ENCODE measurements at regions of chr19 and their contacts with region 1.

Region 1: DNA sequence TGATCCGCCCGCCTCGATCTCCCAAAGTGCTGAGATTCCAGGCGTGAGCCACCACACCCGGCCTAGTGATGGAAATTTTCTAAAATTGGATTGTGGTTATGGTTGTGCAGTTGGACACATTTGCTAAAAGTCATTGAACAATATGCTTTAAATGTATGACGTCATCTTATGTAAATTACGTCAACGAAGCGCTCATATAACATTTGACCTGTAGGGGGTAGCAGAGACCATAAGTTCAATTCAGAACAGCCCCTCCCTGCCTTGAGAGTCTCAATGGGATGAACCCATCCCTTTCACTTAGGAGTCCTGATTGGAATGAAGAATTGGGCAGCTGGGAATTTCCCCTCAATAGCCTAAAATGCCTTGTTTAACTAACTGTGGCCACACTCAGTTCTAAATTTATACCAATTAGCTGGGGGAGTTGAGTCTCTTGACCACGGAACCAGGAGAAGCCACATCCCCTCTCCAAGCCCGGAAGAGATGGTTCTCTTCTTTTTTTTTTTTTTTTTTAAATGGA is 15.3 kb upstream of the TLE6 start:
- DNase-seq: peak; percentile 72
- H3K4me3 ChIP-seq: no peak overlapping the region
- H3K27ac ChIP-seq: no peak overlapping the region
- H3K4me1 ChIP-seq: no peaks in the 10 kb centered on the region
- H3K27me3 ChIP-seq: no peaks in the 10 kb centered on the region
- CTCF ChIP-seq: peak; percentile 74

Region 2: GRCh38 chr19:2900296-2901252 is 61.5 kb before region 1 on chr19 and contains the start of gene ZNF57:
- intact Hi-C with region 1: no loop called
- DNase-seq: peak; percentile 100
- H3K4me3 ChIP-seq: peak within 1 kb of the TSS; percentile 57
- H3K27ac ChIP-seq: peak within 1 kb of the TSS; percentile 72
- H3K4me1 ChIP-seq: no peaks in the 10 kb centered on the region
- H3K27me3 ChIP-seq: no peaks in the 10 kb centered on the region
- CTCF ChIP-seq: no peak
- total RNA-seq, gene ZNF57: 10.9 to 12.4 TPM

Region 3: GRCh38 chr19:3075895-3076431 is 113.9 kb after region 1 on chr19:
- intact Hi-C with region 1: loop called (anchors 5 kb)
- DNase-seq: peak; percentile 78
- H3K4me3 ChIP-seq: no peak overlapping the region
- H3K27ac ChIP-seq: no peak overlapping the region
- H3K4me1 ChIP-seq: no peaks in the 10 kb centered on the region
- H3K27me3 ChIP-seq: no peaks in the 10 kb centered on the region
- CTCF ChIP-seq: peak; percentile 96

Region 4: GRCh38 chr19:3108775-3109174 is 146.7 kb after region 1 on chr19:
- intact Hi-C with region 1: loop called (anchors 5 kb)
- DNase-seq: peak; percentile 74
- H3K4me3 ChIP-seq: no peak overlapping the region
- H3K27ac ChIP-seq: no peak overlapping the region
- H3K4me1 ChIP-seq: peaks cover 10% of the 10 kb centered on the region
- H3K27me3 ChIP-seq: no peaks in the 10 kb centered on the region
- CTCF ChIP-seq: peak; percentile 83

Region 5: GRCh38 chr19:3163230-3163886 is 201.3 kb after region 1 on chr19:
- intact Hi-C with region 1: loop called (anchors 5 kb)
- DNase-seq: peak; percentile 68
- H3K4me3 ChIP-seq: no peak overlapping the region
- H3K27ac ChIP-seq: no peak overlapping the region
- H3K4me1 ChIP-seq: no peaks in the 10 kb centered on the region
- H3K27me3 ChIP-seq: no peaks in the 10 kb centered on the region
- CTCF ChIP-seq: peak; percentile 91

Measured in colonic mucosa (tissue), 4 donors.